ENCODE measurements at regions of chr5 and their contacts with region 1.

Region 1: DNA sequence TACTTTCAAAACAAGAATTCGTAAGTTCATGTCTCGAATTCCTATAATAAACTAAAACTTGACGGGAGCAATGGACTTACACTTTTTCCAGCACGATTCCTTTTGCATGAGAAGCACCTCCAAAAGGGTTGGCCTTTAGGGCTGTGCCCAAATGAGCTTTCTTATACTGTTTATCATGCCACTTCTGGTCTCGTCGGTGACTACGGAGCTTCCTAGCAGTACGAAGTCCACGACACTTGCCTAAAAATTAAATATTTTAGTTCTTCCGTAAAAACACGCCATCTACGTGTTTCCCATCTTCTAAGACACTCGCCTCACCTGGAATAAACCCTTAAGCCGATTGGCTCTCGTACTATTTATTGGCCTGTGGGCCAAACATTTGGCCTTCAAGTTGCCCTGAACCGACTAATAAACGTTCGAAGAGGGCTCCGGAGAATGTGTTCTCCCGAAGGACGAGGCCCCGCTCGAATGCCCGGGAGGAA is 500 bp downstream of the RPS23 start:
- DNase-seq: no peak
- H3K4me3 Mint-ChIP-seq: peak overlapping the region; percentile 78
- H3K27ac Mint-ChIP-seq: peak overlapping the region; percentile 96
- H3K4me1 Mint-ChIP-seq: peaks cover 22% of the 10 kb centered on the region
- H3K27me3 Mint-ChIP-seq: no peaks in the 10 kb centered on the region
- CTCF ChIP-seq: no peak

Region 2: DNA sequence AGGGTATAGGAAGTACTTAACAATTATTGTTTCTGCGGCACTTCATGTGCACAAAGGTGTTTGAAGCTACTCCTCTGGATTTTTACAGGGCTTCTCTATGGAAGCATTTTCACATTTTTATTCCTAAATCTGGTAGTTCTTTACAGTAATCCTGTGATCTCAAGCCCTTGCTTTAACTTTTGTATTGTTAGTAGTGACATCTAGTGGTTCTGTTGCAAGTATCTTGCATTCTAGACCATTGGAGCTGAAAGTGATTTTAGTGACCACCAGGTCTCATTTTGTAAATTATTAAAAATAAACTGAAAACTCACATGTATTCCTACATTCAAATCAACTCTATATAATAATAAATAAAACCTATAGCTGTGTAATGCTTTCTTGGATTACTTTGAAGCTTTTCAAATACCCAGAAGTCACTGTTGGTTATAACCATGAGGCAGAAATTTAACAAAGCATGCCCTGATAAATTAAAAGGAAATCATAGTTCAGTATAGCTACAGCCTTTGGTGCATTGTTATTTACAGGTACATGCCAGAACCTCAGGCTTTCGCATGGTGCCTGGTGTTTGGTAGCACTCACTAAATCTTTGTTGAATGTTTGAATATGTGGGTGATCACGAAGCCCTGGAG is 18.4 kb before region 1 on chr5:
- CTCF ChIA-PET with region 1: no interaction called
- intact Hi-C with region 1: loop called (anchors 1 kb)
- DNase-seq: no peak
- H3K4me3 Mint-ChIP-seq: no peak overlapping the region
- H3K27ac Mint-ChIP-seq: no peak overlapping the region
- H3K4me1 Mint-ChIP-seq: no peaks in the 10 kb centered on the region
- H3K27me3 Mint-ChIP-seq: no peaks in the 10 kb centered on the region
- CTCF ChIP-seq: no peak

Region 3: DNA sequence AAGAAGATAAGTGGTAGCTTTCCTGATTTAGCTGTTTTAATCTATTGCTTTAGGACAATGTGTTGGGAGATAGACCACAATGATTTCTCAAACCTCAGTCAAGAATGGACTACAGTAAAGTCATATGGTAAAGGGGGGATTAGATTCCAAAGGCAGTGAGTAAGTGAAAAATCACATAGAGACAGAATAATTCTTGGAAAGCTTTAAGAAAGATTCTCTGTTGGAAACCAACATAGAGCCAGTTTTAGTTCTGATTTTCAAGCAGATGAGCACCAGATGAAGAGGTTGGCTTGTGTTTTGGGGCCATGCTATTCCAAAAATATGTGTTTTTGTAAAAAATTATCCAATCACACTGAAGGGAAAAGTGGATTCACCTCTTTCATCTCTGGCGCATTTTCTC is 257.3 kb after region 1 on chr5:
- CTCF ChIA-PET with region 1: no interaction called
- intact Hi-C with region 1: no loop called
- DNase-seq: no peak
- H3K4me3 Mint-ChIP-seq: no peak overlapping the region
- H3K27ac Mint-ChIP-seq: no peak overlapping the region
- H3K4me1 Mint-ChIP-seq: no peaks in the 10 kb centered on the region
- H3K27me3 Mint-ChIP-seq: no peaks in the 10 kb centered on the region
- CTCF ChIP-seq: no peak